ENCODE measurements at regions of chr12 and their contacts with region 1.

Region 1: DNA sequence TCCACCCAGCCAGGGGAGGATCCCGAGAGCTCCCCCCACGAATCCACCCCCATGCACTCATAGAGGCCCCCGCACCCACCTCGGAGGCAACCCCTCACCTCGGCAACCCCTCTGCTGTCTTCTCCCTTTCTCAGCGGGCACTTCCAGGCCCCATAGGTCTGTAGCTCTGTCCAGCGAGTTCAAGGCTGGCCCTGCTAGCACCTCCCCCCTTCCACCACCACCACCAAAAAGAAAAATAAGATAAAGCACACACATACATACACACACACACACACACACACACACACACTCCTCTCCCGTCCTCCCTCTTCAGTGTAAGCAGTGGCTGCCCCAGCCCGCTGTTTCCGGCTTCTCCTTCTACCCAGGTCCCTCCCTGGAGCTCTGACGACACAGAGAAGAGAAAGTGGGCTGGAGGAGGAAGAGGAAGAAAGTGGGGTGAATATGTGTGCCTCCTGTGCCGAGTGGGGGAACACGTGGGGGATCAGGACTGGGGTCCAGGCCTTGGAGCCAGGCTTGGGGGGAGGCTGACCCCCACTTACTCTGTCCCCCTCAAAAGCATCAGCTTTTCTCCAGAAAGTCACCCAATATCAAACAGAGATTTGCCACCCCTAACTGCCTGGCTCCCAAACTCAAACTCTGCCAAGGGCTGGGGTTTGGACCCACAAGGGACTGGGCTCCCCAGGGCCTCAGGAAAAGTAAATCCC is at the start of gene STAT6:
- DNase-seq: peak; percentile 64
- ATAC-seq: peak; percentile 58
- H3K4me3 Mint-ChIP-seq: peak within 1 kb of the TSS; percentile 100
- H3K27ac Mint-ChIP-seq: peak within 1 kb of the TSS; percentile 98
- H3K4me1 Mint-ChIP-seq: peaks cover 46% of the 10 kb centered on the region
- H3K27me3 Mint-ChIP-seq: no peaks in the 10 kb centered on the region
- CTCF ChIP-seq: no peak
- total RNA-seq, gene STAT6: 635 and 745 TPM in 2 replicates

Region 2: GRCh38 chr12:56630160-56630632 is 481.0 kb before region 1 on chr12 and contains the start of gene BAZ2A:
- CTCF ChIA-PET with region 1: interaction called, 5 read pairs
- POLR2A ChIA-PET with region 1: interaction called, 20 read pairs
- intact Hi-C with region 1: loop called (anchors 1 kb)
- DNase-seq: peak; percentile 74
- ATAC-seq: peak; percentile 62
- H3K4me3 Mint-ChIP-seq: peak within 1 kb of the TSS; percentile 96
- H3K27ac Mint-ChIP-seq: peak within 1 kb of the TSS; percentile 88
- H3K4me1 Mint-ChIP-seq: peaks cover 80% of the 10 kb centered on the region
- H3K27me3 Mint-ChIP-seq: no peaks in the 10 kb centered on the region
- CTCF ChIP-seq: no peak
- total RNA-seq, gene BAZ2A: 153 and 192 TPM in 2 replicates

Region 3: GRCh38 chr12:56751712-56752598 is 359.2 kb before region 1 on chr12 and contains the start of gene PRIM1:
- CTCF ChIA-PET with region 1: interaction called, 7 read pairs
- POLR2A ChIA-PET with region 1: interaction called, 11 read pairs
- intact Hi-C with region 1: loop called (anchors 1 kb)
- DNase-seq: peak; percentile 81
- ATAC-seq: peak; percentile 83
- H3K4me3 Mint-ChIP-seq: peak within 1 kb of the TSS; percentile 96
- H3K27ac Mint-ChIP-seq: peak within 1 kb of the TSS; percentile 94
- H3K4me1 Mint-ChIP-seq: peaks cover 43% of the 10 kb centered on the region
- H3K27me3 Mint-ChIP-seq: no peaks in the 10 kb centered on the region
- CTCF ChIP-seq: no peak
- total RNA-seq, gene PRIM1: 15.1 and 16.8 TPM in 2 replicates

Region 4: DNA sequence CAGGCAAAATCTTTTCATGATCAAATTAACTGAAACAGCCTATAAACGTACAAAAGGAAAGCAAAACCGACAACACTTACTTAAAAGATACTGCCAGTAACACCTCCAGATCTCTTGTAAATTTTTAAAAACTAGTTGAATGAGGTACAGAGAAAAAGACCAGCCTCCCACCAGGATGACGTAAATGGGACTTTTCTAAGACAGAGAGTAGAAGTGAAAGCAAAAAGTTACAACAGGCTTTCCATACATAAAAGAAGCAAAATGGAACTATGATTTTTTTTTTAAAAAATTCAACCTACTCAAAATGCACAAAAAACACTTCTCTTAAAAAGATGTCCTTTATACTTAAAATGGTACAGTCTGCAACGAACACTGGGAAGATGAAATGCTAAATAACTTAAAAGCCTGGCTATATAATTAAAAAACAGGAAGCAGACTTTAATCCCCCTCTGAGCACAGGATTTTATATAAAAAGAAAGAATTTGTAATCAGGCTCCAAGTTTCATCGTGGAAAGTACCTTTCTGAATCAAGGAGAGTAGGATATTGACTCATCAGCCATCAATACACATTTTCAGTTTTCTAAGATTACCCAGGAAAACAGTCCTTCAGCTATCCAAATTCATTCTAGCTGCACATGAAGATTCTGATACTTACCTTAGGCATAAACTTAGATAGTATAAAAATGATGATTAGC is 47.0 kb before region 1 on chr12:
- CTCF ChIA-PET with region 1: interaction called, 368 read pairs
- POLR2A ChIA-PET with region 1: interaction called, 359 read pairs
- intact Hi-C with region 1: loop called (anchors 1 kb)
- DNase-seq: no peak
- ATAC-seq: peak; percentile 79
- H3K4me3 Mint-ChIP-seq: peak overlapping the region; percentile 83
- H3K27ac Mint-ChIP-seq: peak overlapping the region; percentile 92
- H3K4me1 Mint-ChIP-seq: peaks cover 37% of the 10 kb centered on the region
- H3K27me3 Mint-ChIP-seq: no peaks in the 10 kb centered on the region
- CTCF ChIP-seq: no peak

Region 5: GRCh38 chr12:57096750-57097553 is 14.2 kb before region 1 on chr12:
- CTCF ChIA-PET with region 1: interaction called, 45 read pairs
- POLR2A ChIA-PET with region 1: interaction called, 692 read pairs
- intact Hi-C with region 1: loop called (anchors 1 kb)
- DNase-seq: no peak
- ATAC-seq: no peak
- H3K4me3 Mint-ChIP-seq: no peak overlapping the region
- H3K27ac Mint-ChIP-seq: peak overlapping the region; percentile 63
- H3K4me1 Mint-ChIP-seq: peaks cover 54% of the 10 kb centered on the region
- H3K27me3 Mint-ChIP-seq: no peaks in the 10 kb centered on the region
- CTCF ChIP-seq: no peak

Region 6: DNA sequence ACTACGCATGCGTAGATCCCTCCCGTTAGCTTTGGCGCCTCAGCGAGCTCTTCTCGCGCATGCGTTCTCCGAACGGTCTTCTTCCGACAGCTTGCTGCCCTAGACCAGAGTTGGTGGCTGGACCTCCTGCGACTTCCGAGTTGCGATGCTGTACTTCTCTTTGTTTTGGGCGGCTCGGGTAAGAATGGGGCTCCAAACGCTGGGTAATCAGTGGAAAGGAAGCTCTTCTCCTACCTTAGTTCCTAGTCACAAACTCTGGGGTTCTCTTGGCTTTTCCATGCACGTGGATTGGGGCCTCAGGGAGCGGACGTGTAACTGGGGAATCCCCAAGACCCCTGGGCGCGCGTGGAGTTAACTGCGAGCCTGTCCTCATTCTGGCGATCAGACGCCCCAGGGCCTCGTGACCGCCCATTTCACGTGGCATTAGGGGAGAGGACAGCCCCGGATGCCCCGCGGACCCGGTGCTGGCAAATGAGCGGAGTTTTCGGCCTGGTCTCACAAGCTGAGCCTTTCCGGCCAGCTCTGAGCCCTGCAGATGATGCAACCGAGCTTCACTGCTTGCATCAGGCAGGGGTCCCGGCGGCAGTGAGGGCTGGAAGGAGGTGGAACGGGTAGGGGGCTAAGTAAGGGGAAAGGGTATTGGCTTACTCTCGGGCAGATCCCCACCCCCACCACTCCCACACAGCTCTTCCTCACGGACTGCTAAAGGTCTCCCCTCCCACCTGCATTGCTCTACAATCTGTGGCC is 118.6 kb after region 1 on chr12 and contains the start of gene SHMT2:
- CTCF ChIA-PET with region 1: interaction called, 3 read pairs
- POLR2A ChIA-PET with region 1: interaction called, 10 read pairs
- intact Hi-C with region 1: no loop called
- DNase-seq: peak; percentile 76
- ATAC-seq: peak; percentile 56
- H3K4me3 Mint-ChIP-seq: peak within 1 kb of the TSS; percentile 98
- H3K27ac Mint-ChIP-seq: peak within 1 kb of the TSS; percentile 97
- H3K4me1 Mint-ChIP-seq: peaks cover 86% of the 10 kb centered on the region
- H3K27me3 Mint-ChIP-seq: peaks cover 3% of the 10 kb centered on the region
- CTCF ChIP-seq: no peak
- total RNA-seq, gene SHMT2: 268 and 270 TPM in 2 replicates

Measured in activated B cell treated with CpG ODN at 0.5 μM for 24 hours (primary cell).